MCF 10A (cell line): ENCODE measurements at regions of chr5 and their contacts with region 1.

Region 1: GRCh38 chr5:74673011-74673790 is 11.8 kb upstream of the HEXB start:
- DNase-seq: peak; percentile 54
- H3K4me3 Mint-ChIP-seq: no peak overlapping the region
- H3K27ac Mint-ChIP-seq: no peak overlapping the region
- H3K4me1 Mint-ChIP-seq: peaks cover 13% of the 10 kb centered on the region
- H3K27me3 Mint-ChIP-seq: no peaks in the 10 kb centered on the region
- CTCF ChIP-seq: peak; percentile 64

Region 2: GRCh38 chr5:74660140-74660539 is 13.1 kb before region 1 on chr5:
- CTCF ChIA-PET with region 1: interaction called, 32 read pairs
- POLR2A ChIA-PET with region 1: no interaction called
- intact Hi-C with region 1: no loop called
- DNase-seq: no peak
- H3K4me3 Mint-ChIP-seq: no peak overlapping the region
- H3K27ac Mint-ChIP-seq: no peak overlapping the region
- H3K4me1 Mint-ChIP-seq: peaks cover 5% of the 10 kb centered on the region
- H3K27me3 Mint-ChIP-seq: no peaks in the 10 kb centered on the region
- CTCF ChIP-seq: no peak

Region 3: GRCh38 chr5:74684900-74685851 is 12.0 kb after region 1 on chr5 and contains the start of gene HEXB:
- CTCF ChIA-PET with region 1: interaction called, 15 read pairs
- POLR2A ChIA-PET with region 1: interaction called, 6 read pairs
- intact Hi-C with region 1: no loop called
- DNase-seq: peak; percentile 85
- H3K4me3 Mint-ChIP-seq: peak within 1 kb of the TSS; percentile 80
- H3K27ac Mint-ChIP-seq: peak within 1 kb of the TSS; percentile 46
- H3K4me1 Mint-ChIP-seq: peaks cover 18% of the 10 kb centered on the region
- H3K27me3 Mint-ChIP-seq: no peaks in the 10 kb centered on the region
- CTCF ChIP-seq: no peak
- total RNA-seq, gene HEXB: 82.8 and 93.7 TPM in 2 replicates

Region 4: GRCh38 chr5:74693191-74693590 is 20.0 kb after region 1 on chr5:
- CTCF ChIA-PET with region 1: interaction called, 15 read pairs
- POLR2A ChIA-PET with region 1: no interaction called
- intact Hi-C with region 1: no loop called
- DNase-seq: peak; percentile 54
- H3K4me3 Mint-ChIP-seq: no peak overlapping the region
- H3K27ac Mint-ChIP-seq: peak overlapping the region; percentile 17
- H3K4me1 Mint-ChIP-seq: peaks cover 10% of the 10 kb centered on the region
- H3K27me3 Mint-ChIP-seq: no peaks in the 10 kb centered on the region
- CTCF ChIP-seq: no peak

Region 5: GRCh38 chr5:74903165-74903787 is 230.1 kb after region 1 on chr5:
- CTCF ChIA-PET with region 1: interaction called, 4 read pairs
- POLR2A ChIA-PET with region 1: no interaction called
- intact Hi-C with region 1: loop called (anchors 1 kb)
- DNase-seq: peak; percentile 83
- H3K4me3 Mint-ChIP-seq: no peak overlapping the region
- H3K27ac Mint-ChIP-seq: no peak overlapping the region
- H3K4me1 Mint-ChIP-seq: no peaks in the 10 kb centered on the region
- H3K27me3 Mint-ChIP-seq: no peaks in the 10 kb centered on the region
- CTCF ChIP-seq: peak; percentile 64

Region 6: DNA sequence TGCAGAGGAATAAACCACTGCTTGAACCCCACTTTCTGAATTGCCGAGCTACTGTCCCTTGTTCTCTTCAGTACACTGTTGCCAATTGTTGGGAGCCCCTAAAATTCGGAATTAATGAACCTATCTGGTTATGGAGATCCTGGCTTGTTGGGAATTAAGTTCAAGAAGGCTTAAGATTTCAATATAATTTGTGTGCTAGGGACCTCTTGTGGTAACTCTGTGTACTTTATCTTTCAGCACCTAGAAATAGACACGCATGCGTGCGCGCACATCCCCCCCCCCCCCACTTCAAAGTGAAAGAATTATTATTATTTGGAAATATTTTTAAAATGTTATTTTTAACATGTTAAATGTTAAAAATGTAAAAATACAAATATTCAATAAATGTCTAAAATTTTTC is 246.3 kb after region 1 on chr5:
- CTCF ChIA-PET with region 1: interaction called, 68 read pairs
- POLR2A ChIA-PET with region 1: no interaction called
- intact Hi-C with region 1: loop called (anchors 1 kb)
- DNase-seq: peak; percentile 58
- H3K4me3 Mint-ChIP-seq: no peak overlapping the region
- H3K27ac Mint-ChIP-seq: no peak overlapping the region
- H3K4me1 Mint-ChIP-seq: peaks cover 7% of the 10 kb centered on the region
- H3K27me3 Mint-ChIP-seq: peaks cover 6% of the 10 kb centered on the region
- CTCF ChIP-seq: peak; percentile 56

Region 7: GRCh38 chr5:75265731-75266130 is 592.5 kb after region 1 on chr5:
- CTCF ChIA-PET with region 1: interaction called, 4 read pairs
- POLR2A ChIA-PET with region 1: no interaction called
- intact Hi-C with region 1: loop called (anchors 2 kb)
- DNase-seq: peak; percentile 47
- H3K4me3 Mint-ChIP-seq: no peak overlapping the region
- H3K27ac Mint-ChIP-seq: no peak overlapping the region
- H3K4me1 Mint-ChIP-seq: no peaks in the 10 kb centered on the region
- H3K27me3 Mint-ChIP-seq: no peaks in the 10 kb centered on the region
- CTCF ChIP-seq: peak; percentile 63